ENCODE measurements at regions of chr17 and their contacts with region 1.

Region 1: GRCh38 chr17:68291844-68292695 is 775 bp downstream of the ARSG start:
- DNase-seq: peak; percentile 85 to 98 (median 92)
- ATAC-seq: peak; percentile 69
- H3K4me3 ChIP-seq: peak overlapping the region; percentile 56
- H3K4me3 Mint-ChIP-seq: peak overlapping the region; percentile 89
- H3K27ac ChIP-seq: peak overlapping the region; percentile 5 to 82
- H3K27ac Mint-ChIP-seq: peak overlapping the region; percentile 98
- H3K4me1 ChIP-seq: peaks cover 71% of the 10 kb centered on the region
- H3K4me1 Mint-ChIP-seq: peaks cover 76% of the 10 kb centered on the region
- H3K27me3 ChIP-seq: no peaks in the 10 kb centered on the region
- H3K27me3 Mint-ChIP-seq: no peaks in the 10 kb centered on the region
- CTCF ChIP-seq: no peak

Region 2: GRCh38 chr17:68184816-68185436 is 107.1 kb before region 1 on chr17:
- CTCF ChIA-PET with region 1: no interaction called
- POLR2A ChIA-PET with region 1: interaction called, 24 read pairs
- intact Hi-C with region 1: loop called in 1 of 2 experiments (anchors 5 kb)
- DNase-seq: peak in 12 of 14 experiments; percentile 32 to 87 (median 49)
- ATAC-seq: peak; percentile 63
- H3K4me3 ChIP-seq: peak overlapping the region; percentile 65
- H3K4me3 Mint-ChIP-seq: peak overlapping the region; percentile 74
- H3K27ac ChIP-seq: peak overlapping the region; percentile 67 to 76
- H3K27ac Mint-ChIP-seq: peak overlapping the region; percentile 83
- H3K4me1 ChIP-seq: peaks cover 62% of the 10 kb centered on the region
- H3K4me1 Mint-ChIP-seq: peaks cover 60% of the 10 kb centered on the region
- H3K27me3 ChIP-seq: no peaks in the 10 kb centered on the region
- H3K27me3 Mint-ChIP-seq: no peaks in the 10 kb centered on the region
- CTCF ChIP-seq: no peak

Region 3: DNA sequence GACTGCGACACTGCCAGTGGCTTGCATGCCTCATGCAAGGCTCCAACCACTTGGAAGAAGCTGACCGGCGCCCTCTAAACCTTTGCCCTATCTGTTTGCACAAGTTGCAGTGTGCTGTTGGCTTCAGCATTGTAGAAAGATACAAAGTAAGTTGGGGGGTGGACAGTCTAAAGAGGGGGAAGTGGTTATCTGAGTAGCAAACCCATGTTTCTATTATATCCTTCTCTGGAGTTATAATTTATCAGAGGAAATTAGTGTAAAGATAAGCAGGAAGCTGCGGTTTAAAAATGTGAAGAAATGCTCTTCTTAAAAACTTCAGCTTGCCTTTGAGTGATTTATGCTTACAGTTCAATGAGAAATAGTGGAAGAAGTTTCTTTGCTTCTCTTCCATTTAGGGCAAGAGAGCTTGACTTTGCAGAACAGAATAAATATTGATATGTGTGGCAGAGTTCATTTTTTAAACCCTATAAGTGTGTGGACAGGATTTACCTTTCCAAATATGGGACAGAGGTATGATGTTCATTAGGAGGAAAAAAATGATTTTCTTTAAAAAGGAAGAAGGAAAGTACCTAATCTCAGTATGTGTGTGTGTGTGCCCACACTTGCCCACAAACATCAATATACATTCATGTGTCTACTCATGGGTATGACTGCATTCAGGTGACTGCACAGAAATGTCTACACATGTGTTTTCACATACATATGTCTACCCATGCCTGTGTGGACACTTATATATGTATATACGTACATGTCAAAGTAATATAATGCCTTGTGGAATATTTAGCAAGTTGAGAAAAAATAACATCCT is 36.1 kb before region 1 on chr17:
- CTCF ChIA-PET with region 1: interaction called, 3 read pairs
- POLR2A ChIA-PET with region 1: interaction called, 51 read pairs
- intact Hi-C with region 1: no loop called
- DNase-seq: peak in 3 of 14 experiments; percentile 54 to 81 (median 68)
- ATAC-seq: peak; percentile 36
- H3K4me3 ChIP-seq: no peak overlapping the region
- H3K4me3 Mint-ChIP-seq: peak overlapping the region; percentile 21
- H3K27ac ChIP-seq: peak overlapping the region; percentile 1 to 84
- H3K27ac Mint-ChIP-seq: peak overlapping the region; percentile 96
- H3K4me1 ChIP-seq: peaks cover 61% of the 10 kb centered on the region
- H3K4me1 Mint-ChIP-seq: peaks cover 88% of the 10 kb centered on the region
- H3K27me3 ChIP-seq: no peaks in the 10 kb centered on the region
- H3K27me3 Mint-ChIP-seq: no peaks in the 10 kb centered on the region
- CTCF ChIP-seq: no peak

Region 4: DNA sequence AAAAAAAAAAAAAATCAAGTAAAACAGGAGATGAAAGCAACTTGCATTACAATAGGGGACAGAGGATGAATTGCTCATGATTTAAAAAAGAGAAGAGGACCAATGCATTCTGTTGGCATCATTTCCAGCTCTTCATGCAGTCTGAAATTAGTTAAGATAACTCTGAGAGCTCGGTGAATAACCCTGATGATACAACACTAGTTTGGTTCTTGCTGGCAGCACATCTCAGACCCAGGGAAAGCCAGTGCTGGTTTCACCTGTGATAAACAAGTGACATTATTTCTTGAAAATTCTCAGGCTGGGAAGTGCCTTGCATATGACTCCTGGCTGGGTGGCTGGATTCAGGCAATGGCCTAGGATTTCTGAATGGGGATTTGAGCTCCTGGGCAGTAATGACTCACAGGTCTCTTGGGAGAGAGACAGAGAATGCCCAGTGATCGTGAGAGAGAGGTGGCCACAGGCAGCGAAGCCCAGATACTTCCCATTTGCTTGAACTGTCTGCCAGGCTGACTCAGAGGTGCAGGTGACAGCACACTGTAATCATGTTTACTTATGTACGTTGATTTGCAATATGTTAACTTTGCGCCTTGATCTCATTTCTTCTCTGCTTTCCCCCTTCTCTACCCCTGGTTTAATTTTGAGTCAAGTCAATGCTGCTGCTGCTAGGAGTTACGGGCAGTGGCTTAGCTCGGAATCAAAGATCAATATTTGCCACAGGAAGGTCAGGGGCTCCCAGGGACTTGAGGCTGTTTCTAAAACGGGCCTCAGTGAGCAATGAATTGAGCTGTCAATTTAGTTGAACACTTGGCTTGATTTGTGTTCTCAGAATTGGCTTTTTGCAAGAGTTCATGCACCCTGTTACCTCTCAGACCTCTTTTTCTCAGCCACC is 26.3 kb after region 1 on chr17:
- CTCF ChIA-PET with region 1: no interaction called
- POLR2A ChIA-PET with region 1: interaction called, 14 read pairs
- intact Hi-C with region 1: loop called in 1 of 2 experiments (anchors 2 kb)
- DNase-seq: peak in 2 of 14 experiments; percentile 59 to 71
- ATAC-seq: no peak
- H3K4me3 ChIP-seq: no peak overlapping the region
- H3K4me3 Mint-ChIP-seq: no peak overlapping the region
- H3K27ac ChIP-seq: no peak overlapping the region
- H3K27ac Mint-ChIP-seq: no peak overlapping the region
- H3K4me1 ChIP-seq: peaks cover 50% of the 10 kb centered on the region
- H3K4me1 Mint-ChIP-seq: peaks cover 63% of the 10 kb centered on the region
- H3K27me3 ChIP-seq: no peaks in the 10 kb centered on the region
- H3K27me3 Mint-ChIP-seq: no peaks in the 10 kb centered on the region
- CTCF ChIP-seq: no peak

Region 5: GRCh38 chr17:68383443-68384321 is 91.6 kb after region 1 on chr17:
- CTCF ChIA-PET with region 1: no interaction called
- POLR2A ChIA-PET with region 1: interaction called, 11 read pairs
- intact Hi-C with region 1: no loop called
- DNase-seq: peak in 4 of 14 experiments; percentile 40 to 70 (median 48)
- ATAC-seq: peak; percentile 61
- H3K4me3 ChIP-seq: no peak overlapping the region
- H3K4me3 Mint-ChIP-seq: peak overlapping the region; percentile 60
- H3K27ac ChIP-seq: peak overlapping the region in 1 of 2 donors; percentile 11
- H3K27ac Mint-ChIP-seq: peak overlapping the region; percentile 16
- H3K4me1 ChIP-seq: peaks cover 13% of the 10 kb centered on the region
- H3K4me1 Mint-ChIP-seq: peaks cover 31% of the 10 kb centered on the region
- H3K27me3 ChIP-seq: no peaks in the 10 kb centered on the region
- H3K27me3 Mint-ChIP-seq: no peaks in the 10 kb centered on the region
- CTCF ChIP-seq: no peak

Region 6: GRCh38 chr17:68435876-68436842 is 144.1 kb after region 1 on chr17:
- CTCF ChIA-PET with region 1: interaction called, 8 read pairs
- POLR2A ChIA-PET with region 1: interaction called, 33 read pairs
- intact Hi-C with region 1: loop called in 1 of 2 experiments (anchors 2 kb)
- DNase-seq: peak; percentile 74 to 92 (median 82)
- ATAC-seq: peak; percentile 80
- H3K4me3 ChIP-seq: no peak overlapping the region
- H3K4me3 Mint-ChIP-seq: peak overlapping the region; percentile 8
- H3K27ac ChIP-seq: no peak overlapping the region
- H3K27ac Mint-ChIP-seq: peak overlapping the region; percentile 95
- H3K4me1 ChIP-seq: peaks cover 40% of the 10 kb centered on the region
- H3K4me1 Mint-ChIP-seq: peaks cover 61% of the 10 kb centered on the region
- H3K27me3 ChIP-seq: no peaks in the 10 kb centered on the region
- H3K27me3 Mint-ChIP-seq: no peaks in the 10 kb centered on the region
- CTCF ChIP-seq: peak; percentile 89